Calu3 (cell line): ENCODE measurements at regions of chr17 and their contacts with region 1.

Region 1: GRCh38 chr17:39153599-39154051 is 2.2 kb upstream of the PLXDC1 start:
- DNase-seq: peak; percentile 100
- H3K4me3 Mint-ChIP-seq: peak overlapping the region; percentile 95
- H3K27ac Mint-ChIP-seq: peak overlapping the region; percentile 99
- H3K4me1 Mint-ChIP-seq: peaks cover 29% of the 10 kb centered on the region
- H3K27me3 Mint-ChIP-seq: peaks cover 89% of the 10 kb centered on the region
- CTCF ChIP-seq: peak; percentile 28

Region 2: GRCh38 chr17:38752119-38752929 is 401.3 kb before region 1 on chr17 and contains the start of gene PSMB3:
- CTCF ChIA-PET with region 1: interaction called, 11 read pairs
- intact Hi-C with region 1: loop called (anchors 5 kb)
- DNase-seq: peak; percentile 100
- H3K4me3 Mint-ChIP-seq: peak within 1 kb of the TSS; percentile 78
- H3K27ac Mint-ChIP-seq: peak within 1 kb of the TSS; percentile 85
- H3K4me1 Mint-ChIP-seq: peaks cover 28% of the 10 kb centered on the region
- H3K27me3 Mint-ChIP-seq: no peaks in the 10 kb centered on the region
- CTCF ChIP-seq: no peak
- total RNA-seq, gene PSMB3: 893 and 935 TPM in 2 replicates

Region 3: DNA sequence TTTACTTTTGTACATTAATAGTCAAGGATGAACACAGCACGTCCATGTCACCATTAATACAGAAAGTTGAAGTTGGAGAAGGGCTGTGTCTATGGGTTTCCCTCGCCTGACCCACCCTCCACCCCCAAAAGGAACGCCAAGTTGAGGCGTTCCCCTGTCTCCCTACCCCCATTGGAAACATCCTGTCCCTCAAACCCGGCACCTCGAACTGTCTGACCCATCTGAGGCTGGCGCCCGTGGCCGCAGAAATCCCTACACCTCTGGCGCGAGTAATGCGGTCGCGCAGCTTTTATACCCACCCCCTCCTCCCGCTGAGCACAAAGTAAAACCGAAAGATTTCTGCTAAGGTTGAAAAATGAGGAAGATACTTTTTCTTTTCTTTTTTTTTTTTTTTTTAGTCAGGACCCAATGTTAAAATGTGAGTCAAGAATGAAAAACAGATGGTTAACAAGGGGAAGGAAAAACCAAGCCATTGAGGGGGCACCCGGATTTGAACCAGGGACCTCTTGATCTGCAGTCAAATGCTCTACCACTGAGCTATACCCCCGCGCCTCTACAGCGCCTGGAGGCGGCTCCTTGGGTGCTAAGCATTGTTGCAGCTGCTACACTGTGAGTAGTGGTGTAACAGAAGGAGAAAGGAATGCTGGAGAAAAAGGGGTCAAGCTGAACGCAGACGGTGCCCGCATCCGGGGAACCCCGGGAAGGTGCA is 284.7 kb before region 1 on chr17:
- CTCF ChIA-PET with region 1: interaction called, 53 read pairs
- intact Hi-C with region 1: loop called (anchors 1 kb)
- DNase-seq: peak; percentile 100
- H3K4me3 Mint-ChIP-seq: peak overlapping the region; percentile 95
- H3K27ac Mint-ChIP-seq: peak overlapping the region; percentile 97
- H3K4me1 Mint-ChIP-seq: peaks cover 51% of the 10 kb centered on the region
- H3K27me3 Mint-ChIP-seq: no peaks in the 10 kb centered on the region
- CTCF ChIP-seq: no peak

Region 4: GRCh38 chr17:39082482-39082881 is 71.1 kb before region 1 on chr17:
- CTCF ChIA-PET with region 1: interaction called, 12 read pairs
- intact Hi-C with region 1: no loop called
- DNase-seq: no peak
- H3K4me3 Mint-ChIP-seq: no peak overlapping the region
- H3K27ac Mint-ChIP-seq: no peak overlapping the region
- H3K4me1 Mint-ChIP-seq: no peaks in the 10 kb centered on the region
- H3K27me3 Mint-ChIP-seq: peaks cover 87% of the 10 kb centered on the region
- CTCF ChIP-seq: no peak

Region 5: DNA sequence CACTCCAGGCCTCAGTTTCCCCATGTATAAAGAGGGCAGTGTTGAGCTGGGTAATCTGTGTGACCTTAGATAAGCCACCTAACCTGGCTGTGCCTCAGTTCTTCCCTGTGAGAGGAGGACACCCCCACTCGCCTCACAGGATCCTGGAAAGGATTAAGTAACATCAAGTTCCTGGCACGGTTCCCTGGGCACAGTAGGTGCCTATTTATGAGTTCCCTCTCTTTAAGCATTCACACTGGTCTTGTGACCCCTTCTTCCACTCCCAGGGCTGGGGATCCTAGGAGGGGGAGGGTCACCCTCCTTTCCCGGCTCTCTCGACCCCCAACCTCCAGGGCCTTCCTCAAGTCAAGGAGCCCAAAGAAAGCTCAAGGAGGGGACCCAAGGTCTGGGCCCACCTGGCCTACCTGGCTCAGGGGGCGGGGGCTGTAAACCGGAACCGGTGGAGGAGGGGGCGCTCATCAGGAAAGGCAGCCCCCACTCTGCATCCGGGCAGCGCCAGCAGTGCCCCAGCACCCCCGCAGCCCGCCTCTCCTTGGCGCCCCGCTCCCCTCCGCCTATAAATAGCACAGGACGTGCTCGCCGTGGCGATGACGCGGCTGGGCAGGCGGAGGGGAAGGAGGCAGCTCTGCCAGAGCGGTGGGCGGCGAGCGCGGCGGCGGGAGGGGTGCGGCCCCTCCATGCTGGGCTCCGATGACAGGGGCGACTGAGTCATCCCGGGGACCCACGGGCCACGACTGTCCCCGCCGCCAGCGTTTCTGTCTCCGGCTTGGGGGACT is 55.9 kb after region 1 on chr17:
- CTCF ChIA-PET with region 1: interaction called, 11 read pairs
- intact Hi-C with region 1: no loop called
- DNase-seq: peak; percentile 81
- H3K4me3 Mint-ChIP-seq: peak overlapping the region; percentile 55
- H3K27ac Mint-ChIP-seq: peak overlapping the region; percentile 16
- H3K4me1 Mint-ChIP-seq: peaks cover 43% of the 10 kb centered on the region
- H3K27me3 Mint-ChIP-seq: peaks cover 63% of the 10 kb centered on the region
- CTCF ChIP-seq: peak; percentile 13

Region 6: DNA sequence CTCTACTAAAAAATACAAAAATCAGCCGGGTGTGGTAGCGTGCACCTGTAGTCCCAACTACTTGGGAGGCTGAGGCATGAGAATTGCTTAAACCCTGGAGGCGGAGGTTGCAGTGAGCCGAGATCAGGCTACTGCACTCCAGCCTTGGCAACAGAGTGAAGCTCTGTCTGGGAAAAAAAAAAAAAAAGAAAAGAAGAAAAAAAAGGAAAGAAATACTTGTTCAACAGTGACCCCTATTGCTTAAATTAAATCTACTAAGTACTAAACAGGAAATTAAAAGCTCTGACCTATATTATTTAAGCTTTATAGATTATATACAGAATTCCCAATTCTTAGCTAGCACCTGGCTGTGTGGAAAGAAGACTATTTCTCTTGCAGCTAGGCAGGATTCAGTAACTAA is 198.9 kb after region 1 on chr17:
- CTCF ChIA-PET with region 1: interaction called, 10 read pairs
- intact Hi-C with region 1: no loop called
- DNase-seq: no peak
- H3K4me3 Mint-ChIP-seq: no peak overlapping the region
- H3K27ac Mint-ChIP-seq: peak overlapping the region; percentile 96
- H3K4me1 Mint-ChIP-seq: peaks cover 41% of the 10 kb centered on the region
- H3K27me3 Mint-ChIP-seq: no peaks in the 10 kb centered on the region
- CTCF ChIP-seq: peak; percentile 59

Region 7: DNA sequence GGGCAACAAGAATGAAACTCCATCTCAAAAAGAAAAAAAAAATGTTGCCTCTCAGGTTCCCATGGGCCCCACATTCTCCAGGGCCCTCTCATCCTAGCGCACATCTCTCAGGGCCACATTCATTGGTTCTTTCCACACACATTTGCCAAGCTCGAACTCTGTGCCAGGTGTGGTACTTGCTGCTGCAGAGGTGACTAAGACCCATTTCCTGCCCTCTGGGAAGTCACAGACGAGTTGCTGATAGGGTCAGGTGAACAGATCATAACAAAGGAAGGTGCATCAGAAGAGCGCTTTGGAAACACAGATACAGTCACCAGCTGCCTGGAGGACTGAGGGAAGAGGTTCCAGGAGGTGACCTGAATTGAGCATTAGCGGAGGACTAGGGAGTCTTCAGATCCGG is 810.2 kb after region 1 on chr17:
- CTCF ChIA-PET with region 1: no interaction called
- intact Hi-C with region 1: no loop called
- DNase-seq: peak; percentile 94
- H3K4me3 Mint-ChIP-seq: no peak overlapping the region
- H3K27ac Mint-ChIP-seq: peak overlapping the region; percentile 0
- H3K4me1 Mint-ChIP-seq: peaks cover 45% of the 10 kb centered on the region
- H3K27me3 Mint-ChIP-seq: peaks cover 32% of the 10 kb centered on the region
- CTCF ChIP-seq: no peak